Right lobe of liver (tissue), 6 donors: ENCODE measurements at regions of chr11 and their contacts with region 1.

Region 1: GRCh38 chr11:118353084-118353710 is 6.2 kb upstream of the UBE4A start:
- DNase-seq: no peak
- ATAC-seq: no peak
- H3K4me3 ChIP-seq: no peak overlapping the region
- H3K27ac ChIP-seq: no peak overlapping the region
- H3K4me1 ChIP-seq: no peaks in the 10 kb centered on the region
- H3K27me3 ChIP-seq: no peaks in the 10 kb centered on the region
- CTCF ChIP-seq: peak; percentile 53 to 61 (median 56)
- POLR2A ChIP-seq: no peak

Region 2: DNA sequence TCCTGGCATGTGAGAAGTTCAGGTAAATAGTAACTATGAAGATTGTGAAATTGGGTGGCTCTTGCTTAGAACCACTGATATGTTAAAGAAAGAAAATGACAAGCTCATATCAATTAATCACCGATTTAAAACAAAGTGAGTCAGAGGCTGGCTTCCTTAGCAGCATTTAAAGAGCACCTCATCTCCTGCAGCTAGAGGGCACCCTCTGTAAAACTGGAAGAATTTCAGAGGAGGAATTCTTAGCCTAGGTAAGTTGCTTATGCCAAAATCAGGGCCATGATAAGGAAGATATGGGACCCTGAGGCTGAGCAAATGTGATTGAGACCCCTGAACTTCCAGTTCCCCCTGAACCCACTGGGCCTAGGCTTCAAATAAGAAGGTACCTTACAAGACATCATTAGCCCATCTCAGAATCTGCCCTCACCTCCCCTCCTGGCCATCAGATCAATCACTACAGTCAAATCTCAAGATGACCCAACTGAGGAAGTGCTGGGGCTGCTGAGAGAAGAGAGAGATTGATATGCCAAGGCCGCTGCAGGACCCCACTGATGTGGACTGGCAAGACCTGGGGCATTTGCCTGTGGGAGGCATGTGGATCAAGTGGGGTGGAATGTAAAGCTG is 57.3 kb before region 1 on chr11:
- intact Hi-C with region 1: loop called (anchors 5 to 10 kb)
- DNase-seq: no peak
- ATAC-seq: peak; percentile 67 to 83 (median 76)
- H3K4me3 ChIP-seq: no peak overlapping the region
- H3K27ac ChIP-seq: no peak overlapping the region
- H3K4me1 ChIP-seq: peaks cover 0 to 7% (median 0%) of the 10 kb centered on the region in 4 donors
- H3K27me3 ChIP-seq: no peaks in the 10 kb centered on the region
- CTCF ChIP-seq: peak; percentile 63 to 72 (median 68)
- POLR2A ChIP-seq: no peak

Region 3: DNA sequence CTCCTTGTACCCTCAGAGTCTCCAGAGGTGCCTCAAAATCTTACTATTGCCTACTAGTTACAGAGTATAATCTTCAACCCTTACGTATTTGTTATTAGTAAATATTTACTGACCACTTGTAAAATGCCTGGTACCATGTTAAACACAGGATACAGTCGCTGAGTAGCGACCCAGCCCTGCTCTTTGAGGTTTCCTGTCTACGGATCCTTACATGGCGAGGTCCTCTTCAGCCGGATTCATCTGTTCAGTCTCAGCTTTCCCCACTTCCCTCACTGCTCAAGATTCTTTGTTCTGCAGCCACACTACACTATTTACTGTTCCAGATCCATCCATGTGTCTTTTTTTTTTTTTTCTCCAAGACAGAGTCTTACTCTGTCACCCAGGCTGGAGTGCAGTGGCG is 160.9 kb after region 1 on chr11:
- intact Hi-C with region 1: no loop called
- DNase-seq: no peak
- ATAC-seq: no peak
- H3K4me3 ChIP-seq: no peak overlapping the region
- H3K27ac ChIP-seq: no peak overlapping the region
- H3K4me1 ChIP-seq: peaks cover 0 to 4% (median 2%) of the 10 kb centered on the region in 4 donors
- H3K27me3 ChIP-seq: no peaks in the 10 kb centered on the region
- CTCF ChIP-seq: no peak
- POLR2A ChIP-seq: no peak